Activated T-helper 1 cell treated with anti-CD3 and anti-CD28 coated beads, Interleukin-12 subunit alpha, Interleukin-12 subunit beta, Interleukin-2, Interleukin-4 antibody, amounts not matched to agents 30 ng/mL and 10 ng/mL and 1 ng/mL, durations not matched to agents 14 hours and 24 hours and 36 hours (primary cell): ENCODE measurements at regions of chr2 and their contacts with region 1.

Region 1: DNA sequence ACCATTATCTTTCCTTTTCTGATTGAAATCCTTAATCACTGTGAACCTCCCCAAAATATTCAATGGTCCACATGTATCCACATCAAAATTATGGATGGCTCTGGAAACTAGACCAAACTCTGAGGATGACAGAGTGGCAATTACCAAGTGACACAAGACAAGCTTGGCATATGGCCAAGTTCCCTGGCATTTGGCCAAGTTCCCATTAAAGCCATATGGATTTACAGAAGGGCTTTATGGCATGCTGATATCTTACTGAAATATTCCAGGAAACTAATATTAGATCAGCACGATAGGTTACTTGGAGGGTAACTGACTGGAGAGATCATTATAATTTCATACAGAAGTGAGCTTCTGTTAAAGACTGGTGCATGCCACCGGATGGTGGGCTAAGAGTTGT is 21.9 kb upstream of the CERS6 start:
- DNase-seq: no peak
- H3K4me3 Mint-ChIP-seq: no peak overlapping the region
- H3K27ac Mint-ChIP-seq: no peak overlapping the region
- H3K4me1 Mint-ChIP-seq: peaks cover 44% of the 10 kb centered on the region
- H3K27me3 Mint-ChIP-seq: peaks cover 2% of the 10 kb centered on the region

Region 2: DNA sequence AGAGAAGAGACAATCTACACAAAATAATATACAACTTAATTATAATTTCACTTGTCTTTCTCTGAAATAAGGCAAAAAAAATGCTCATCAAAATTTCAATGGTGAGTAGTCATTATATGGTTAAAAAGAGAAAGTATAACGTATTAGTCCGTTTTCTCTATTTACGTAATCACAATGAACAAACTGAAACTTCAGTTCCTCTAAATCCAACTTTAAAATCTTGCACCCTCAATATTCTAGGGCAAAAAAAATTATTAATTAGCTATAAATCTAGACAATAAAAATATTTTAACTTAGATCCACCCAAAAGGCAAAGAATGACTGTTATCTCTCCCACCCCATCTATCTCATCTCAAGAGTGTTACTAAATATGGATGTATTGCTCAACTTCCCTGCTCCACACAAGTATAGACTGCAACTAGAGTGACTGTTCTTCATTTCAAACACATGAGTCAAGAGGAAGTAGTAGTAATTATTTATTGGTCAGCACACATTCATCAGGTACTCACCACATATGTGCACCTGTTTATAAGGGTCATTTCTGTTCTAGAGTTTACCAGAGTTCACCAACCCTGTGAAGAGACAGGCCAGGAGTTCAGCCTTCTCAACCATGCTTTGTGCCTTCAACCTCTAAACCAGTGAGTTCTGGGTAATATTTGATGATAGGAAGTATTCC is 223.1 kb before region 1 on chr2:
- intact Hi-C with region 1: loop called (anchors 2 kb)
- DNase-seq: no peak
- H3K4me3 Mint-ChIP-seq: peak overlapping the region; percentile 28
- H3K27ac Mint-ChIP-seq: peak overlapping the region; percentile 85
- H3K4me1 Mint-ChIP-seq: peaks cover 53% of the 10 kb centered on the region
- H3K27me3 Mint-ChIP-seq: no peaks in the 10 kb centered on the region

Region 3: DNA sequence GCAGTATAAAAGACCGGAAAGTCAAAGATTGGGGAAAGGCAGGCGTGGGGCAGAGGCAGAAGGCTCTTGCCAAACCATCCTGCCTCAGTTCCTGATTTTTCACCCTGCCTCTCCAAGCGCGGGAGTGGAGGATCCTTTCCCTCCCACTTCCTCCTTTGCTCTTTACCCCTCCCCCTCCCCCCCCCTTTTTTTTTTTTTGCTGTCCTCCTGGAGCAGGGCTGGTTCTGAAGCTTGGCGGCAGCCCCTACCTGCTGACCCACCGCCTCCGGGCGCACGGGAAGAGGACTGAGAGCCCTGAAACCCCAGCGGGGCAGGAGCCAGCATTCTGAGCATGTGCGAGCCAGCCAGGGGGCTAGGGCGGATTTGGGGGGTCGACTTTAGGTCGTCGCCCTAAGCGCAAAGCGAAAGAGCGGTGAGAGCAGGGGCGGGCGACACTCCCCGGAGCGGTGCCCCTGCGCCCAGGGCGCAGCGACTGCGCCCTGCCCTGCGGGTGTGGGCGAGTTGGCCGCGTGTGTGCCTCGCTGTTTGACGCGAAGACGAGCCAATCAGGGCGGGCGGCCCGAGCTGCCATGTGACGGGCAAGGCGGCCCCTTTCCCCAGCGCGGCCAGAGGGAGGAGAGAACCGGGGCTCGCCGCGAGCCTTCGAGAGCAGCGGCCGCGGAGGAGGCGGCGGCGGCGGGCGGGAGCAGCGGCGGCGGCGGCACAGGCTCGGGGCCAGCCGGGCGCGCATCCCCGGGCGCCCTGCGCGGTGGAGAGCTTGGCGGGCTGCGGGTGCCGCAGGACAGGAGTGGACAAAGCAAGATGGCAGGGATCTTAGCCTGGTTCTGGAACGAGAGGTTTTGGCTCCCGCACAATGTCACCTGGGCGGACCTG is 21.7 kb after region 1 on chr2 and contains the start of gene CERS6:
- intact Hi-C with region 1: loop called (anchors 1 kb)
- DNase-seq: peak; percentile 85
- H3K4me3 Mint-ChIP-seq: peak within 1 kb of the TSS; percentile 93
- H3K27ac Mint-ChIP-seq: peak within 1 kb of the TSS; percentile 80
- H3K4me1 Mint-ChIP-seq: peaks cover 37% of the 10 kb centered on the region
- H3K27me3 Mint-ChIP-seq: peaks cover 3% of the 10 kb centered on the region
- total RNA-seq, gene CERS6: 27.0 and 27.1 TPM in 2 replicates

Region 4: GRCh38 chr2:168536925-168537466 is 102.8 kb after region 1 on chr2:
- intact Hi-C with region 1: loop called (anchors 5 kb)
- DNase-seq: no peak
- H3K4me3 Mint-ChIP-seq: no peak overlapping the region
- H3K27ac Mint-ChIP-seq: no peak overlapping the region
- H3K4me1 Mint-ChIP-seq: peaks cover 44% of the 10 kb centered on the region
- H3K27me3 Mint-ChIP-seq: no peaks in the 10 kb centered on the region

Region 5: DNA sequence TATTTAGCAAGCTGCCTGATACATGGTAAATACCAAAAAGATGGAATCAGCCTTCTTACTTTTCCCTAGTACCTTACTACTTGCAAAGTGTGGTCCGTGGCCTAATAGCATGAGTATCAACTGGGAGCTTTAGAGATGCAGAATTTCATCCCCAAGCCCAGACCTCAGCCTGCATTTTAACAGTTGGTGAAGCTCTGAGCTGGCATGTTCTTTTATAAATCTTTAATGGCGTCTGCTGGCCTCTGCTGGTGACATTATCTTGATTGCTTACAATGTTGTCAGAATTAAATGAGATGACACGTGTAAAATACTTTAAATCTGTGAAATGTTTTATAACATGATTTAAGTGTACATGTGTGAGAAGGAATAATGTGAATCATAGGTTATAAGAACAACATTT is 253.2 kb after region 1 on chr2:
- intact Hi-C with region 1: loop called (anchors 5 kb)
- DNase-seq: no peak
- H3K4me3 Mint-ChIP-seq: no peak overlapping the region
- H3K27ac Mint-ChIP-seq: no peak overlapping the region
- H3K4me1 Mint-ChIP-seq: peaks cover 15% of the 10 kb centered on the region
- H3K27me3 Mint-ChIP-seq: no peaks in the 10 kb centered on the region

Region 6: GRCh38 chr2:168890006-168890782 is 456.0 kb after region 1 on chr2 and contains the start of gene SPC25:
- intact Hi-C with region 1: loop called (anchors 2 kb)
- DNase-seq: peak; percentile 87
- H3K4me3 Mint-ChIP-seq: peak within 1 kb of the TSS; percentile 98
- H3K27ac Mint-ChIP-seq: peak within 1 kb of the TSS; percentile 92
- H3K4me1 Mint-ChIP-seq: peaks cover 32% of the 10 kb centered on the region
- H3K27me3 Mint-ChIP-seq: peaks cover 21% of the 10 kb centered on the region
- total RNA-seq, gene SPC25: 17.9 and 19.9 TPM in 2 replicates